WTC11 (cell line): ENCODE measurements at regions of chr2 and their contacts with region 1.

Region 1: DNA sequence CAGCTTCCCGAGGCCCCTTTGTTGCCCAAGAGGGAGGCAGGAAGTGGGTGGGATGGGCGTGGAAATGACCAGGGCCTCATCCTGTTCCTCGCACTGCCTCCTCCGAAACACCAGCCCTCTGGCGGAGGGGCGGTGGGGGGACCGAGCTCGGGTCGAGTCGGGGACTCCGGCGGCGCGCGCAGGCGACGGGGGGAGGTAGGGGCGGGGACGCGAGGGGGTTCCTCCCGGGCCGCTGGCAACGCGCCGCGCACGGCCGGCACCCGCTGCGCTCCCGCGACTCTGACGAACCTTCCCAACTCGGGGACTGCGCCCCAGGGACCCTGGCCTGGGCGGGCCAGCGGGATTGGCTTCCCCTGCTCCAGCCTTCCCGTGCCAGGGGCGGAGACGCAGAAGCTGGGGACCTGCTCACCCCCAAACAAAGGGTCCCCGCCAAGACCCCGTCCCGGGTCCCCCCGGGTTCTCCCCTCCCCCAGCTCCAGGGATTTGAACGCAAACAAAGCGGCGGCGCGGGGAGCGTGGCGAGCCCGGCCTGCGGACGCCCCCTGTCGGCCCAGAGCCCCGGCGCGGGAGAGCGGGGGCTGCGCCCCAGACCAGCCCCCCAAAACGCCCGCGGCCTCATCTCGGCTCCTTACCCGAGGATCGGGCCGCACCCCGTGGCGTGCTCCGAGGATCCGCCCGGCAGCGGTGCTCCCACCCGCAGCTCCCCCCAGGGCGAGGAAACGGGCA is 1.2 kb downstream of the SEMA4C start:
- DNase-seq: peak; percentile 74
- ATAC-seq: peak; percentile 61
- H3K4me3 Mint-ChIP-seq: peak overlapping the region; percentile 82
- H3K27ac Mint-ChIP-seq: no peak overlapping the region
- H3K4me1 Mint-ChIP-seq: peaks cover 37% of the 10 kb centered on the region
- H3K27me3 Mint-ChIP-seq: 0 out of 2 replicates have a peak, but pooled peaks cover 4% of the 10 kb centered on the region
- CTCF ChIP-seq: peak; percentile 45; the same call in 1 of the 2 replicates

Region 2: DNA sequence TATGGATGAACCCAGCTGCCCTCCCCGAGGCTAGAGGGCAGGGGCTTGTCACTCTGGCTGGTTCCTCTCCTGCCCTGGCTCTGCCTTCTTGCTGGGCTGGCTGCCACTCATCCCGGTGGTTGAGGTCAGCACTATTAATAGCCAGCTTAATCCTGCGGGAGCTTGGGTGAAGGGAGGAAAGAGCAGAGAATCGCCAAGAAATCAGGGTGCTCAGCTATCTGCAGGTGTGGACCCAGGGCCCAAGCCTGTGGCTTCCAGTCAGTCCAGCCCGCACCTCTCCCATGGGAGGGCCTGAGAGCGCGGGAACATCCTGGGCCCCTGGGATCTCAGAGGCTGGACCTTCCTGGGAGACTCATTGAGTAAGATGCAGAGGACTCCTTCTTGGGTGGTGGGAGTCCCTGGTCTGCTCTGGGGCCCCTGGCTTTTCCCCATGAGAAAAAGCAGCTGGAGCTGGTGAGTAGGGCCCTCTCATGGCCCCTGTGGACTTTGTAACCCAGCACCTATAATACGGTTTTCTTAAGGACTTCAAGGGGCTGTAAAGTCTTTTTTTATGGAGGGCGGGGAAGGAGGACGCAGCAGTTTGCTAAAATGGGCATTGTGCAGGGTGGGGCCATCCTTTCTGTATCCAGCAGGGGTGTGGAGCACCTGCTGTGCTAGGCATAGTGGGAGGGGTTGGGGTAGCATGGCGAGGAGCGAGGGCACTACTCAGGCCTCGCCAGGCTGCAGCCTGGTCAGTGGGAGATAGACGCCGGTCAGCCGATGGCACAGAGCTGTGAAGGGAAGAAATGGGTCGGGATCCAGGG is 80.1 kb before region 1 on chr2:
- CTCF ChIA-PET with region 1: no interaction called
- POLR2A ChIA-PET with region 1: no interaction called
- DNase-seq: no peak
- ATAC-seq: no peak
- H3K4me3 Mint-ChIP-seq: no peak overlapping the region
- H3K27ac Mint-ChIP-seq: peak overlapping the region; percentile 9; the same call in 1 of the 2 replicates
- H3K4me1 Mint-ChIP-seq: peaks cover 5% of the 10 kb centered on the region; the same call in 1 of the 2 replicates
- H3K27me3 Mint-ChIP-seq: no peaks in the 10 kb centered on the region
- CTCF ChIP-seq: no peak

Region 3: GRCh38 chr2:96891491-96892333 is 23.0 kb after region 1 on chr2:
- CTCF ChIA-PET with region 1: interaction called, 10 read pairs
- POLR2A ChIA-PET with region 1: interaction called, 4 read pairs
- DNase-seq: no peak
- ATAC-seq: peak; percentile 77
- H3K4me3 Mint-ChIP-seq: no peak overlapping the region
- H3K27ac Mint-ChIP-seq: peak overlapping the region; percentile 40; the same call in 1 of the 2 replicates
- H3K4me1 Mint-ChIP-seq: peaks cover 51% of the 10 kb centered on the region
- H3K27me3 Mint-ChIP-seq: no peaks in the 10 kb centered on the region; the same call in 1 of the 2 replicates
- CTCF ChIP-seq: no peak

Region 4: DNA sequence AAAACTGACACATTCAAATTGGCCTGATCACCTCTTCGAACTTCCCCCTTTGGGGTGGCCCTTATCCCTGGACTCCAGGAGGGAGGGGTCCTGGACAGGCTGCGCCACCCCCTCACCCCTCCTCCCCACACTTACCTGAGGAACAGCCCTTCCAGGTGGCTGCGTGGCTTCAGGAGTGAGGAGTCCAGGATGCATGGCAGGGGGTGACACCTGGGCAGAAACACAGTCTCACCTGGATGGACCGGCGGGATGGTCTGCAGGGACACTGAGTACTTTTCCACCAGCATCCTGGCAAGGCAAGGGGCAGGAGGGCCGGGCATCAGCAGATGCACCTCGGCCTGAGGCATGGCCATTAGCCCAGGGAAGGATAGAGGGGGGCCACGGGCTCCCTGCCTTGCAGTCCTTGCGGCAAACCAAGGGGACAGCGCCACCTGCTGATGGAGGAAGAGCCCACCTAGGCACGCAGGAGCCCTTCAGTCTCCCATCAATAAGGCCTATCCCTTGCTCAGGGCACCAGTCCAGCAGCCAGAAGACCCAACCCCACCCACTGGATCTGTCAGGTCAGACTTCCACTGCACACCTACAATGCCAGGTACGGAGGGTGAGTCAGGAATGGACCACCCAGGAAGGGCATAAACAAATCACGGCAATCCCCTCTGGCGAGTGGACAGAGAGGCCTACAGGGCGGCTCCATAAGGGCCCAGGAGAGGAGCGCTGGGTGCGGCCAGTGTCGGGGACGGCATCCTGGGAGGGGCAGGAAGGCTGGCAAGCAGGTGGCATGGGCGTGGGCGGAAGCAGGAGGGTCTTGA is 91.6 kb after region 1 on chr2:
- CTCF ChIA-PET with region 1: interaction called, 15 read pairs
- POLR2A ChIA-PET with region 1: no interaction called
- DNase-seq: peak; percentile 95
- ATAC-seq: peak; percentile 92
- H3K4me3 Mint-ChIP-seq: no peak overlapping the region
- H3K27ac Mint-ChIP-seq: no peak overlapping the region
- H3K4me1 Mint-ChIP-seq: peaks cover 14% of the 10 kb centered on the region
- H3K27me3 Mint-ChIP-seq: no peaks in the 10 kb centered on the region
- CTCF ChIP-seq: peak; percentile 93